ENCODE measurements at regions of chr14 and their contacts with region 1.

Region 1: GRCh38 chr14:90758028-90758889 is 58.0 kb downstream of the TTC7B start:
- DNase-seq: peak; percentile 94
- H3K4me3 ChIP-seq: peak overlapping the region in 2 of 3 experiments; percentile 34
- H3K27ac ChIP-seq: peak overlapping the region; percentile 61
- H3K4me1 ChIP-seq: peaks cover 15% of the 10 kb centered on the region
- H3K27me3 ChIP-seq: no peaks in the 10 kb centered on the region
- CTCF ChIP-seq: peak; percentile 79 to 94
- POLR2A ChIP-seq: no peak

Region 2: DNA sequence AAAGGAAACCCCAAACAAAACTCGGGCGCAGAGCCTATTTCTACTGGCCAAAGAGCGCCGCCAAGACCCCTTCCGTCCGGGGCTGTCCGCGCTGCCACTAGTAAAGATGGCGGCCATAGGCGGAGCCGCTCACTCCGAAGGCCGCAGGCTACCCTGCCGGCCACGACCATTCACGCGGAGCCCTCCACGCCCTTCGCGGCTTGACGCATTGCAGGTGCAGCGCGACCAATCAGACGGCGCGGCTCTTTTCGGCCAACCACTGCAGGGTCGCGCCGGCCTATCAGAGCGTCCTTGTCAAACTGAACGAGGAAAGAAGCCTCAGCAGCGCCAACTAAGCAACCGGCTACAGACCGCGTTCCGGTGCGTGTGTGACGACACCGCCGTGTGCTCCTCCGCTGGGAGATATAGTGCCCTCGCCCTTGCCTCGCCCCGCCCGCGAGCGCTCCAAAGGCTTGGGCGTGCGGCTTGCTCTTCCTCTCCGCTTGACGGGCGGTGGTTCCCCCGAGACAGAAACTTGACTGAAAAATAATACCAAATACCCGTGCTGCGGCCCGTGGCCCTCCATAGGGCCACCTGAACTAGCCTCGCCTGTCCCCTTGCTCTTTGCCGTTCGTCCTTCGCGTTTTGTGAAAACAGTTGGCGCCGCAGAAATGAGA is 375.1 kb before region 1 on chr14:
- CTCF ChIA-PET with region 1: interaction called, 4 read pairs
- POLR2A ChIA-PET with region 1: no interaction called
- dilution Hi-C with region 1: no loop called
- intact Hi-C with region 1: loop called (anchors 1 kb)
- DNase-seq: peak; percentile 100
- H3K4me3 ChIP-seq: peak overlapping the region; percentile 47 to 70 (median 58)
- H3K27ac ChIP-seq: peak overlapping the region; percentile 97
- H3K4me1 ChIP-seq: peaks cover 17% of the 10 kb centered on the region
- H3K27me3 ChIP-seq: peaks cover 0 to 2% of the 10 kb centered on the region in 2 experiments
- CTCF ChIP-seq: no peak
- POLR2A ChIP-seq: peak; percentile 77

Region 3: GRCh38 chr14:90615517-90616060 is 142.7 kb before region 1 on chr14:
- CTCF ChIA-PET with region 1: interaction called, 4 read pairs
- POLR2A ChIA-PET with region 1: no interaction called
- dilution Hi-C with region 1: no loop called
- intact Hi-C with region 1: loop called (anchors 2 kb)
- DNase-seq: peak; percentile 78
- H3K4me3 ChIP-seq: peak overlapping the region in 2 of 3 experiments; percentile 19 to 38
- H3K27ac ChIP-seq: peak overlapping the region; percentile 93
- H3K4me1 ChIP-seq: peaks cover 71% of the 10 kb centered on the region
- H3K27me3 ChIP-seq: no peaks in the 10 kb centered on the region
- CTCF ChIP-seq: no peak
- POLR2A ChIP-seq: no peak

Region 4: DNA sequence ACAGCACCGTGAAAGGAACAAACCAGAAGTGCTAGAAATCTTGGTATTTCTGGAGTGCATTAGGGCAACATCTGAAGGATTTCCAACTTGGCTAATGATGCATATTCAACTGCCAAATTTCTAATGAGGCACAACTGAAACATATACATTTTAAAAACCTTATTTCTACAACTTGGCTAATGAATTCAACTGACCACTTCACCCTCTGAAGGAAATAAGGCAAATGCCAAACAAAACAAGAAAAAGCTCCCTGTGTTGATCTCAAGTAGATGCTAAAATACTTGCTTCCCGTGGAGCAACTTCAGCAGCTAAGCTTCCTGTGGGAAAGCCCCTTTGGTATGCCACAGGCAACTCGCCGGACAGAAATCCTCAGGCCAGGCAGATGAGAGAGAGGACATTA is 109.2 kb before region 1 on chr14:
- CTCF ChIA-PET with region 1: no interaction called
- POLR2A ChIA-PET with region 1: no interaction called
- dilution Hi-C with region 1: no loop called
- intact Hi-C with region 1: no loop called
- DNase-seq: peak; percentile 70
- H3K4me3 ChIP-seq: no peak overlapping the region
- H3K27ac ChIP-seq: no peak overlapping the region
- H3K4me1 ChIP-seq: peaks cover 7% of the 10 kb centered on the region
- H3K27me3 ChIP-seq: no peaks in the 10 kb centered on the region
- CTCF ChIP-seq: no peak
- POLR2A ChIP-seq: no peak

Region 5: GRCh38 chr14:90726656-90727055 is 31.6 kb before region 1 on chr14:
- CTCF ChIA-PET with region 1: no interaction called
- POLR2A ChIA-PET with region 1: no interaction called
- dilution Hi-C with region 1: no loop called
- intact Hi-C with region 1: no loop called
- DNase-seq: no peak
- H3K4me3 ChIP-seq: no peak overlapping the region
- H3K27ac ChIP-seq: no peak overlapping the region
- H3K4me1 ChIP-seq: no peaks in the 10 kb centered on the region
- H3K27me3 ChIP-seq: no peaks in the 10 kb centered on the region
- CTCF ChIP-seq: no peak
- POLR2A ChIP-seq: no peak

Region 6: GRCh38 chr14:90774316-90774715 is 16.1 kb after region 1 on chr14:
- CTCF ChIA-PET with region 1: interaction called, 22 read pairs
- POLR2A ChIA-PET with region 1: no interaction called
- dilution Hi-C with region 1: no loop called
- intact Hi-C with region 1: no loop called
- DNase-seq: no peak
- H3K4me3 ChIP-seq: no peak overlapping the region
- H3K27ac ChIP-seq: no peak overlapping the region
- H3K4me1 ChIP-seq: no peaks in the 10 kb centered on the region
- H3K27me3 ChIP-seq: no peaks in the 10 kb centered on the region
- CTCF ChIP-seq: no peak
- POLR2A ChIP-seq: no peak

Region 7: DNA sequence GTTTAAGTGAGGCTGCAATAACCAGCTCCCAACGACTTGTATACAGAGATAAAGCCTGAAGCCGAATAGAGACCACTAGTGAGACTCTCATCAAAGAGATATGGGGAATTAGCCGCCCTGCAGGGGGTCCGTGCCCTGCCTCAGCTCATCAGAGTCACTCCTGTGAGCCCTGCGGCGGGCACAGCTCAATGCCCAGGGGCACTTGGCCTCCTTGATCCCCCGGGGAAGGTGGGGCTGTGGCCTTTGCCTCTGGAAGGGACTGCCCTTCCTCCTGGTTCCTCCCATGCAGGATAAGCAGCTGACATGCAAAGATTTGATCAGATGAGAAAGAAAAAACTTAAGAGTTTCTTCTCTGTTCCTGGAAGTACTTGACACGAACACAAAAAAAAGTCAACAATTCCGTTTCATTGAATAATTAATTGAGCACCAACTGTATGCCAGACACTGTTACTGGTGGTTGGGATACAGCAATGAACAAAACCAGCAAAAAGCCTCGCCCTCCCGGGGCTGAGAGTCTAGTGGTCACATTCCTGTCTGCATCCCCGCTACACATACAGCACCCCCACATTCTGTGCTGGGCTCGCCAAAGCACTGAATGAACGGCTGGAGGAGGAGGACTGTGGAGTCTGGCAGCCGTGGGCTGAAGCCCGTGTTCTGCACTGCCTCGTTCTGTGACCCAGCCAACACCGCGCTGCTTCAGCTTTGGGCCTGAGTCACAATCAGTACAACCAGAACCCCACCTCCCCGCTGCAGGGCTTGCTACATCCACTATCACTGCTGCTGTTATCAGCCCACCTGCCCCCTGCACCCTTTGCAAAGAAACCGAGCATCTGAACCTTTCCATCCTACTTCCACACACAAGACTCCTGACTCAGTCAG is 47.6 kb after region 1 on chr14:
- CTCF ChIA-PET with region 1: interaction called, 17 read pairs
- POLR2A ChIA-PET with region 1: no interaction called
- dilution Hi-C with region 1: no loop called
- intact Hi-C with region 1: loop called (anchors 1 kb)
- DNase-seq: no peak
- H3K4me3 ChIP-seq: no peak overlapping the region
- H3K27ac ChIP-seq: peak overlapping the region; percentile 17
- H3K4me1 ChIP-seq: peaks cover 52% of the 10 kb centered on the region
- H3K27me3 ChIP-seq: no peaks in the 10 kb centered on the region
- CTCF ChIP-seq: no peak
- POLR2A ChIP-seq: no peak

Region 8: DNA sequence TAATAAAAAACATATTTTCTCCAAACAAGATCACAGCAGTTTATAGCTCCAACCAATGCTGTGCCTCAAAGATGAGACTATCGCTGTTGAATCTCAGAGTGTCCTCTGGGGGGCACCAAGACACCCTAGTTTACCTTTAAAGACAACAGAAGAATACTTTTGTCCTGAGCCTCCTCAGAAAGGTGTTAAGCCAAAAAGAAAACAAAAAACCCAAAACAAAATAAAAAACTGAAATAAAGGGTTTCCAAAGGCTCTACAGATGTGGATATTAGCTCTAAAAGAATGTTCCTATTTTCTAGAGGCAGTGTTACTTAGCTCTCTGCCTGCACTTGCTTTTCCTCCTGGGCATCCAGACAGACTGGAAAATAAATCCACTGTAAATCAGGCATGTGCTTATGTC is 144.8 kb after region 1 on chr14:
- CTCF ChIA-PET with region 1: interaction called, 6 read pairs
- POLR2A ChIA-PET with region 1: no interaction called
- dilution Hi-C with region 1: no loop called
- intact Hi-C with region 1: loop called (anchors 1 kb)
- DNase-seq: peak; percentile 72
- H3K4me3 ChIP-seq: no peak overlapping the region
- H3K27ac ChIP-seq: no peak overlapping the region
- H3K4me1 ChIP-seq: no peaks in the 10 kb centered on the region
- H3K27me3 ChIP-seq: no peaks in the 10 kb centered on the region
- CTCF ChIP-seq: peak; percentile 59 to 66
- POLR2A ChIP-seq: no peak

Region 9: GRCh38 chr14:91193069-91193468 is 434.8 kb after region 1 on chr14:
- CTCF ChIA-PET with region 1: no interaction called
- POLR2A ChIA-PET with region 1: no interaction called
- dilution Hi-C with region 1: no loop called
- intact Hi-C with region 1: no loop called
- DNase-seq: no peak
- H3K4me3 ChIP-seq: no peak overlapping the region
- H3K27ac ChIP-seq: no peak overlapping the region
- H3K4me1 ChIP-seq: no peaks in the 10 kb centered on the region
- H3K27me3 ChIP-seq: no peaks in the 10 kb centered on the region
- CTCF ChIP-seq: no peak
- POLR2A ChIP-seq: no peak

Measured in endothelial cell of umbilical vein (primary cell).